T-cell (primary cell): ENCODE measurements at regions of chr1 and their contacts with region 1.

Region 1: DNA sequence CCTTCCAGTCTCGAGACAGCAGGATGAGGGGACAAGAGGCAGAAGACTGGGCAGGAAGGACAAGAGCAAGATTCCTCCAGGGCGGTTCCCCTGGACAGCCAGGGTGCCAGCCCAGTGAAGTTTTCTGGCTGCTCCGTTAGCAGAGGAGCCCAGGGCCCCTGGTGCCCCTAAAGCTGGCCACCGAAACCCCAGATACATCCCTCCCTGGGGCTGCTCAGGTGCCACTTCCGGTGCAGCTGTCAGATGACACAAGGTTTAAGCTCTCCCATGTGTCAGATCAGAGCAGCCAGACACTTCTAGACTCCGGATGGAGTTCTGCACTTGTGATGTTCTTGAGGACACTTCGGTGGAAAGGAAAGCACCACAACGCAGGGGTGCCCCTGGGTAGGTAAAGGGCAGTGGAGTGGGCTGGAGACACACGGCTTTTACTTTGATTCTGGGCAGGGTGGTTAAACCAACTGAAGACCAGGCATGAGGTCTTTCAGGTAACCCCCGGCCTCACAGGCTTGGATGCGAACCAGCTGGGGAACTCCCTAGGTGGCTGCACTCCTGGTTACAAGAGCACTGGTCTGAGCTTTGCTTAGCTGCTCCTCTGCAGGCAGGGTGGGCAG is 85.7 kb downstream of the ITPKB start:
- DNase-seq: peak; percentile 39 to 88 (median 75)
- ATAC-seq: peak; percentile 74 to 79 (median 75)
- H3K4me3 ChIP-seq: peak overlapping the region in 1 of 2 donors; percentile 11
- H3K4me3 Mint-ChIP-seq: peak overlapping the region in 2 of 3 donors; percentile 60 to 71
- H3K27ac ChIP-seq: no peak overlapping the region
- H3K27ac Mint-ChIP-seq: no peak overlapping the region
- H3K4me1 ChIP-seq: peaks cover 11 to 57% of the 10 kb centered on the region in 2 experiments
- H3K4me1 Mint-ChIP-seq: peaks cover 11 to 30% (median 25%) of the 10 kb centered on the region in 3 donors
- H3K27me3 ChIP-seq: no peaks in the 10 kb centered on the region
- H3K27me3 Mint-ChIP-seq: no peaks in the 10 kb centered on the region

Region 2: DNA sequence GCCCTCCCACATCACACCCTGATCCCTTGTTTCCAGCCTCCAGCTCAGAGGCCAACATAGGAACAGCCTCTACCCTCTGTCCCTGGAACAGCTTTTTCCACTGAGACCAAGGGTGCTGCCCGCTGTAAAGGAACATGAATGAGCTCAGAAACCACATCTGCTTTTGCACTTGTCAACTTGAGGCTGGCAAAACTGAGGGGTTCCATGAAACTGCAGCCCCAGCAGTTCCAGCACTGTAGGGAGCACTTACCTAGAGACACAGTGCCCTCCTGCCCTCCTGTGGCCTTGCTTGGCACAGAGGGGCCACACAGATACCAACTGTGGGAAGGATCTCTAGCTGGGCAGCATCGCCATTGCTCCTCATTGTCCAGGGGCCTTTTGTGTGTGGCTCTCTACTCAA is 34.0 kb after region 1 on chr1:
- CTCF ChIA-PET with region 1: interaction called, 8 to 23 read pairs
- POLR2A ChIA-PET with region 1: no interaction called
- DNase-seq: peak in 31 of 35 experiments; percentile 41 to 74 (median 60)
- ATAC-seq: peak; percentile 17 to 42 (median 36)
- H3K4me3 ChIP-seq: no peak overlapping the region
- H3K4me3 Mint-ChIP-seq: peak overlapping the region in 2 of 3 donors; percentile 8 to 67
- H3K27ac ChIP-seq: peak overlapping the region; percentile 92
- H3K27ac Mint-ChIP-seq: peak overlapping the region; percentile 79 to 93
- H3K4me1 ChIP-seq: peaks cover 93 to 94% of the 10 kb centered on the region in 2 experiments
- H3K4me1 Mint-ChIP-seq: peaks cover 99 to 100% (median 100%) of the 10 kb centered on the region in 3 donors
- H3K27me3 ChIP-seq: no peaks in the 10 kb centered on the region
- H3K27me3 Mint-ChIP-seq: no peaks in the 10 kb centered on the region

Region 3: DNA sequence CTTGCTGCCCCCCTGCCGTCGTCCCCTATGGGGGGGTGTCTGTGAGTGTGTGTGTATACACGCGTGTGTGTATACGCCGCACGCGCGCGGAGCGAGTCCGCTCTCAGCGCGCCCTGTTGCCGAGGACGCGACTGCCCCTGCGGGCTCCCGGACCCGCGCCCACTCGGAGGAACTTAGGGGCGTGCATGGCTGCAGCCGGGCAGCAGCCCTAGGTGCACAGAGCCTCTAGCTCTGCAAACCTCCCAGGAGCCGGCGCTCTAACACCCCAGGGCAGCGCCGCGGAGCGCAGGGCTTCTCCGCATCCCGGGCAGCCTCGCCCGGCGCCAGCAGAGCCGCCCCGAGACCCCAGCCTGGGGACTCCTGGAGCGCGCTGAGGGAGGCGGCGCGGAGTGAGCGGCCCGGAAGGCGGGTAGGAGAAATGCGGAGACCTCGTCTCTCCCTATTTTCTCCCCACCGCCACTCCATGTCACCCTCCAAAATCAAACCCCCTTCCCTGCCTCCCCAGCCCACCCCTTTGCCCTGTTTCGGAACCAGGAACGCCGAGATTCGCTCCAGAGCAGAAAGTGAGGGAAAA is 85.1 kb after region 1 on chr1:
- CTCF ChIA-PET with region 1: no interaction called
- POLR2A ChIA-PET with region 1: interaction called, 3 to 10 read pairs
- DNase-seq: peak in 20 of 35 experiments; percentile 27 to 61 (median 45)
- ATAC-seq: peak; percentile 1 to 32 (median 24)
- H3K4me3 ChIP-seq: peak overlapping the region; percentile 95 to 98
- H3K4me3 Mint-ChIP-seq: peak overlapping the region; percentile 85 to 95 (median 90)
- H3K27ac ChIP-seq: peak overlapping the region; percentile 90
- H3K27ac Mint-ChIP-seq: peak overlapping the region; percentile 96 to 98
- H3K4me1 ChIP-seq: peaks cover 36 to 42% of the 10 kb centered on the region in 2 experiments
- H3K4me1 Mint-ChIP-seq: peaks cover 36 to 49% (median 45%) of the 10 kb centered on the region in 3 donors
- H3K27me3 ChIP-seq: no peaks in the 10 kb centered on the region
- H3K27me3 Mint-ChIP-seq: no peaks in the 10 kb centered on the region

Region 4: GRCh38 chr1:227010645-227011044 is 357.2 kb after region 1 on chr1:
- CTCF ChIA-PET with region 1: no interaction called
- POLR2A ChIA-PET with region 1: no interaction called
- DNase-seq: no peak
- ATAC-seq: no peak
- H3K4me3 ChIP-seq: no peak overlapping the region
- H3K4me3 Mint-ChIP-seq: no peak overlapping the region
- H3K27ac ChIP-seq: no peak overlapping the region
- H3K27ac Mint-ChIP-seq: no peak overlapping the region
- H3K4me1 ChIP-seq: no peaks in the 10 kb centered on the region
- H3K4me1 Mint-ChIP-seq: no peaks in the 10 kb centered on the region
- H3K27me3 ChIP-seq: peaks cover 0 to 3% of the 10 kb centered on the region in 2 experiments
- H3K27me3 Mint-ChIP-seq: peaks cover 3 to 5% of the 10 kb centered on the region in 2 donors